Ascending aorta (tissue), 2 donors: ENCODE measurements at regions of chr22 and their contacts with region 1.

Region 1: DNA sequence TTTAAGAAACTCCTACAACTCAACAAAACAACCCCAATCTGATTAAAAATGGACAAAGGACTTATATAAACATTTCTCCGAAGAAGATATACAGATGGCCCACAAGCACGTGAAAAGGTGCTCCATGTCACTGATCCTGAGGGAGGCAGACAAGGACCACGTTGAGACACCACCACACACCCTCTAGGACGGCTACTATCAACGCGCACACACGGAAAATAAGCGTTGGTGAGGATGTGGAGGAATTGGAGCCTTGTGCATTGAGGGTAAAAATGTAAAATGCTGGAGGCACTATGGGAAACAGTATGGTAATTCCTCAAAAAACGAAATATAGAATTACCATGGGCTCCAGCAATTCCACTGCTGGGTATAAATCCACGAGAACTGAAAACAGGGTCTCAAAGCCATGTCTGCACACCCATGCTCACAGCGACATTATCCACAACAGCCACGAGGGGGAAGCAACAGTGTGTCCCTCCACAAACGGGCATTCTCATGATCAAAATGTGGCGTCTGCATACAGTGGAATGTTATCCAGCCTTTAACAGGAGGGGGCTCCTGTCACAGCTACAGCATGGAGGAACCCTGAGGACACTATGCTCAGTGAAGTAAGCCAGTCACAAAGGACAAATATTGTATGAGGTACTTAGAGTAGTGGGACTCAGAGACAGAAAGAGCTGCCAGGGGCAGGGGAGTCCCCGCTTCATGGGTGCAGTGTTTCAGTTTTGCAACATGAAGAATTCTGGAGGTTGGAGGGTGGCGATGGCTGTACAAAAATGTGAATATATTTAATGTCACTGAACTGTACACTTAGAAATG is 22.5 kb downstream of the YPEL1 start:
- DNase-seq: peak in 1 of 2 donors; percentile 82
- H3K4me3 ChIP-seq: peak overlapping the region; percentile 23 to 38
- H3K27ac ChIP-seq: peak overlapping the region in 1 of 2 donors; percentile 19
- H3K4me1 ChIP-seq: no peaks in the 10 kb centered on the region
- H3K27me3 ChIP-seq: no peaks in the 10 kb centered on the region
- CTCF ChIP-seq: peak; percentile 73 to 76 (median 74)

Region 2: DNA sequence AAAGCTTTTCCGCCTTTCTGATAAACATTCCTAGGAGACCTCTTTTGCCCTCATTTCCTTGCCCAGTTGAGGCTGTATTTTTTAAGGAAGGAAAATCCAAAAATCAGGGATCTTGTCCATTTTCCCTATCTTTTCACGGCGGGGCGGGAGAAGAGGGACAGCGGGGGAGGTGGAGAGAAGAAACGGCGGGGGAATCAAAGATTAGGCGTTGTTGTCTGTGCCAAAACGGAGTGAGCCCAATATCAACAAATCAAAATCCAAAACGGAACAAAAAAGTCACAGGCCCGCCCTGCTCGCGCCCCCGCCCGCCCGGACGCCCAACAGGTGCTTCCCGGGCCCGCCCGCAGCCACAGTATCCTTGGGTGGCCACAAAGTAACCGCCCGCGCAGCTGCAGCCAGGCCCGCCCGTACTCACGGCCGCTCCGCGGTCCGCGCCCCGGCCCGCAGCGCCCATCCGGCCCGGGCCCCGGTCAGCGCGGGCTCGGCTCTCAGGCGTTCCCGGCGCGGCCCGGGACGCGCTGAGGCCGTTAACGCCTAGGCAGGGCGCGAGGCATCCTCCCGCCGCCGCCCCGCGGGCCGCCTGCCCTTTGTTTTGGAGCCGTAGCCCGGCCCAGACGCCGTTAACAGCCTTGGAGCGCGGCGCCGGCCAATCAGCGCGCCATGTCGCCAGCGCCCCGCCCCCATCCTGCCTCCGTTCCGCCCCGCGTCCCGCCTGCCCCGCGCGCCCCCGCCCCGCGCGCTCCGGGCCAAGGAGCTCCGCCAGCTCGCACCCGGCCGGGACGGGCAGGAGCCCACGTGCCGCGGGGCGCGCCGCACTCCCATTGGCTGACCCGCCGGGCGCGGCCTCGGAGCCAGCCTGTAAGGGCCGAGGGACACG is 22.3 kb after region 1 on chr22 and contains the start of gene YPEL1:
- intact Hi-C with region 1: loop called (anchors 1 kb)
- DNase-seq: peak; percentile 91 to 98
- H3K4me3 ChIP-seq: peak within 1 kb of the TSS; percentile 69 to 78
- H3K27ac ChIP-seq: peak within 1 kb of the TSS; percentile 58 to 72
- H3K4me1 ChIP-seq: peaks cover 0 to 7% of the 10 kb centered on the region in 2 donors
- H3K27me3 ChIP-seq: no peaks in the 10 kb centered on the region
- CTCF ChIP-seq: peak in 1 of 3 experiments; percentile 8
- total RNA-seq, gene YPEL1: 1.1 TPM

Region 3: DNA sequence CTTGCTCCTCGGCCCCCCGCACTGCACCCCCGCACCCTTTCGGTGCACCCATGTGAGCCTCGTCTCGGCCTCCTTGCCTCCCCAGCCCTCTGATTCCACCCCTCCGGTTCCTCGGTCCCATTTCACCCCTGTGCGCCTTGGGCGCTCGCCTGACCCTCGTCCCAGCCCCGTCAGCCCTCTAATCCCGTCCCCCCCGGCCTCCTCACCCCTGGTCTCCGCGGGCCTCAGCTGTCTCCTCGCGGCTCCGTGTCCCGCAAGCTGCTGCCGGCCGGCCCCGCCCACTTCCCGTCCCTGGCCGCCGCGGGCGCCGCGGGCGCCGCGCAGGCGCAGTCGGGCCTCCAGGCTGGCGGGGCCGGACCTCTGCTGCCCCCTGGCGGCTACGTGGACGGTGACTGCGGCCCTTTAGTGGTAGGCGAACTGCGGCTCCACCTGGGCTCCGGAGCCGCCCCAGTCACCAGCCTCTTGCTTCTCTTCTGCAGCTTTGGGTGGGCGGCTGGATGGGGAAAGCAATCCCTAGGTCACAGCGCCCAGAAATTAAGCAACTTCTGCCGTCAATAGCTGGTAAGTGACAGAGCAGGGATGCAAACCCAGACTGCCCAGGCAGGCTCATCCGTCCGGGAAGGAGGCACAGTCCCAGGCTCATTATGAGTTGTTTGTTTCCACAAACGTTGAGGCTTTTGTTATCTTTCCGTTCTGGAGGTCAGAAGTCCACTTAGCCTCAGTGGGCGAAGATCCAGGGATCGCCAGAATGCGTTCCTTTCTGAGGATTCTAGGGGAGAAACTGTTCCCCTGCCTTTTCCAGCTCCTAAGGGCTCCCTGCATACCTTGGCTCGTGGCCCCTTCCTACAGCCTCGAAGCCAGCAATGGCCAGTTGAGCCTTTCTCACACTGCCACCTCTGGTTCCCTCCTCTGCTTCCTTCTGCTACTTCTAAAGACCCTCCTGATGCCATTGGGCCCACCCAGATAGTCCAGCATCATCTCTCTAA is 239.8 kb after region 1 on chr22 and contains the start of gene PPM1F:
- intact Hi-C with region 1: loop called (anchors 2 kb)
- DNase-seq: peak; percentile 47 to 92
- H3K4me3 ChIP-seq: peak within 1 kb of the TSS; percentile 77 to 83
- H3K27ac ChIP-seq: peak within 1 kb of the TSS; percentile 37 to 66
- H3K4me1 ChIP-seq: peaks cover 0 to 8% of the 10 kb centered on the region in 2 donors
- H3K27me3 ChIP-seq: no peaks in the 10 kb centered on the region
- CTCF ChIP-seq: peak; percentile 64 to 97 (median 76)
- total RNA-seq, gene PPM1F: 76.0 TPM